ENCODE measurements at regions of chr1 and their contacts with region 1.

Region 1: GRCh38 chr1:154961497-154962262 is at the start of gene PYGO2:
- DNase-seq: peak; percentile 70 to 78
- H3K4me3 ChIP-seq: peak within 1 kb of the TSS; percentile 87 to 91 (median 90)
- H3K27ac ChIP-seq: peak within 1 kb of the TSS; percentile 97 to 100
- H3K4me1 ChIP-seq: peaks cover 0 to 18% of the 10 kb centered on the region in 2 donors
- H3K27me3 ChIP-seq: no peaks in the 10 kb centered on the region
- CTCF ChIP-seq: peak in 1 of 3 donors; percentile 66
- POLR2A ChIP-seq: peak; percentile 32
- total RNA-seq, gene PYGO2: 14.6 to 26.2 (median 20.3) TPM

Region 2: DNA sequence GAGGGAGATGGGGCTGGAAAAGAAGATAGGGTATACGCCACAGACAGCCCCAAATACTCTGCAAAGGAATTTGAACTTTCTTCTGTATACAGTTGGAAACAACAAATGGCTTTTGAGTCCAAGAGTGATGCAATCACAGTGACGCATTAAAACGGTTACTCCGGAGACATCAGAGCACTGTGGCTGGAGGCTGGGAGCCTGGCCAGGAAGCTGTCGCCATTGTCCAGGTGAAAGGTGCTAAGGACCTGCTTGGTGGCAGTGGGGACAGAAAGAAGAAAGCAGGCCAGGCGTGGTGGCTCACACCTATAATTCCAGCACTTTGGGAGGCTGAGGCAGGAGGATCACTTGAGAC is 25.7 kb after region 1 on chr1:
- intact Hi-C with region 1: loop called (anchors 1 kb)
- DNase-seq: no peak
- H3K4me3 ChIP-seq: no peak overlapping the region
- H3K27ac ChIP-seq: no peak overlapping the region
- H3K4me1 ChIP-seq: peaks cover 4 to 11% of the 10 kb centered on the region in 2 donors
- H3K27me3 ChIP-seq: no peaks in the 10 kb centered on the region
- CTCF ChIP-seq: no peak
- POLR2A ChIP-seq: no peak

Region 3: GRCh38 chr1:154998818-154999570 is 37.3 kb after region 1 on chr1:
- intact Hi-C with region 1: loop called (anchors 1 kb)
- DNase-seq: no peak
- H3K4me3 ChIP-seq: peak overlapping the region; percentile 89 to 95 (median 89)
- H3K27ac ChIP-seq: peak overlapping the region; percentile 98 to 99
- H3K4me1 ChIP-seq: peaks cover 9 to 10% of the 10 kb centered on the region in 2 donors
- H3K27me3 ChIP-seq: no peaks in the 10 kb centered on the region
- CTCF ChIP-seq: peak; percentile 68 to 81 (median 80)
- POLR2A ChIP-seq: no peak

Region 4: DNA sequence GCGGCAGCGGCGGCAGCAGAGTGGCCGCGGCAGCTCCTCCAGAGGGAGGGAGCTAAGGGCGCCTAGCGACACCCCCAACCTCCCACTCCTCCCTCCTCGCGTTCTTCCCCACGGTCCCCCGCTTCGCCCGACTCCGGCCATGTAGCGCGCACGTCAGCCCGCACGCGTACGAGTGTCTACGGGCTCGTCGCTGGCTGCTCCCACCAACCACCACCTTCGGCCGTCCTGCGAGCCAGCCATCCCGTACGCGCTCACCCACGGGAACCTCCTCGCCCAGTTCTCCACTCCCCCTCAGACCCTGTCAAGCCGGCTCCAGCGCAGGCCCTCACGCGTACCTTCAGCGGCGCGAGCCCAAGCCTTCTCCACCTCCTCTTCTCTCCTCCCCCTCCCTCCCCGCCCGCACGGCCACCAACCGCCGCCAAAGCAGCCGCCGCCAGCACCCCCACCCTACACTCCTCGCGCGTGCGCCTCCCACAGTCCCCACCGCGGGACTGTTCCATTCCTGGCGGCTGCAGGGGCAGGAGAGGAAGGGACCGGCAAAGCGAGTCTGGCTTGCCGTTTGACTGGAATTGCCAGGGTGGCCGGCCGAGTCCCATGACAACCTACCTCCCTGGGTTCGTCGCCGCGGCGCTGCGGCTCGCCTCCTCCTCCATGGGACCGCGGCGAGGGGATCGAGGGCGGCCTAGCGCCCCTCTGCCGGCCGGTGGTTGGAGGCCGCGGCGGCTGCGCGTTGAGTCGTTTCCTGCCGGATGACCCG is 726.8 kb after region 1 on chr1 and contains the start of gene YY1AP1:
- intact Hi-C with region 1: loop called (anchors 10 kb)
- DNase-seq: peak; percentile 86 to 93
- H3K4me3 ChIP-seq: peak within 1 kb of the TSS; percentile 91 to 97 (median 94)
- H3K27ac ChIP-seq: peak within 1 kb of the TSS; percentile 95 to 97
- H3K4me1 ChIP-seq: peaks cover 3% of the 10 kb centered on the region in 2 donors
- H3K27me3 ChIP-seq: no peaks in the 10 kb centered on the region
- CTCF ChIP-seq: peak in 2 of 3 donors; percentile 41 to 50
- POLR2A ChIP-seq: peak; percentile 57
- total RNA-seq, gene YY1AP1: 107 to 156 (median 155) TPM